ENCODE measurements at regions of chr2 and their contacts with region 1.

Region 1: DNA sequence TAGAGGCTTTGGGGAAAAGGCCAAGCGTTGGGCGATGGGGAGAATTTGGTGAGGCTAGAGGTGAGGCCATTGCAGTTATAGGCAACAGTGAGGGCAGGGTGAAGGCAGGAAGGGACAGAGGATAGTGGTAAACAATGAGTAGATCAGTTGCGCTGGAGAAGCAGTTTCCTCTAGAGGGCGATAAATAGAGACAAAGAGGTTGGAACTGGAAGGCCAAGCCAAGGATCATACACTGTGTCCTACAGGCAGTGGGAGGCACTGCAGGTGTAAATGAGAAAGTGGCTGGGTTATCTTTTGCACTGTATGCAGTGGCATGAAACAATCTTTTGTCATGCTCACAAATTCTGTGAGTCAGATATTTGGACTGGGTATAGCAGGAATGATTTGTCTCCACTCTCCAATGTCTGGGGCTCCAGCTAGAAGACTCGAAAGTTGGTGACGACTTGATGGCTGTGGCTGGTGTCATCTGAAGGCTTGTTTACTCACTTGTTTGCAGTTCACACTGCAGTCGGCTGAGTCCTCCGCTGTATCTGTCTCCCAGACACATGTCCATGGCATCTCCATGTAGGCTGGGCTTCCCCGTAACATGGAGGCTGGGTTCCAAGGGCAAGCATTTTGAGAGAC is 82.1 kb downstream of the TNP1 start:
- DNase-seq: peak; percentile 74 to 77
- H3K4me3 ChIP-seq: no peak overlapping the region
- H3K4me3 Mint-ChIP-seq: no peak overlapping the region
- H3K27ac Mint-ChIP-seq: no peak overlapping the region
- H3K4me1 ChIP-seq: 0 out of 2 replicates have a peak, but pooled peaks cover 2% of the 10 kb centered on the region
- H3K4me1 Mint-ChIP-seq: no peaks in the 10 kb centered on the region
- H3K27me3 ChIP-seq: no peaks in the 10 kb centered on the region
- H3K27me3 Mint-ChIP-seq: peaks cover 7% of the 10 kb centered on the region
- CTCF ChIP-seq: peak; percentile 90 to 93

Region 2: GRCh38 chr2:216849987-216850386 is 72.2 kb after region 1 on chr2:
- CTCF ChIA-PET with region 1: no interaction called
- POLR2A ChIA-PET with region 1: no interaction called
- intact Hi-C with region 1: loop called (anchors 10 kb)
- DNase-seq: no peak
- H3K4me3 ChIP-seq: no peak overlapping the region
- H3K4me3 Mint-ChIP-seq: no peak overlapping the region
- H3K27ac Mint-ChIP-seq: no peak overlapping the region
- H3K4me1 ChIP-seq: peaks cover 18% of the 10 kb centered on the region
- H3K4me1 Mint-ChIP-seq: peaks cover 18% of the 10 kb centered on the region
- H3K27me3 ChIP-seq: no peaks in the 10 kb centered on the region
- H3K27me3 Mint-ChIP-seq: no peaks in the 10 kb centered on the region
- CTCF ChIP-seq: no peak

Region 3: GRCh38 chr2:216897561-216898203 is 119.9 kb after region 1 on chr2:
- CTCF ChIA-PET with region 1: no interaction called
- POLR2A ChIA-PET with region 1: no interaction called
- intact Hi-C with region 1: loop called (anchors 10 kb)
- DNase-seq: no peak
- H3K4me3 ChIP-seq: no peak overlapping the region
- H3K4me3 Mint-ChIP-seq: no peak overlapping the region
- H3K27ac Mint-ChIP-seq: no peak overlapping the region
- H3K4me1 ChIP-seq: peaks cover 11% of the 10 kb centered on the region; the same call in 1 of the 2 replicates
- H3K4me1 Mint-ChIP-seq: peaks cover 10% of the 10 kb centered on the region
- H3K27me3 ChIP-seq: no peaks in the 10 kb centered on the region
- H3K27me3 Mint-ChIP-seq: no peaks in the 10 kb centered on the region
- CTCF ChIP-seq: no peak

Measured in Caco-2 (cell line).